ENCODE measurements at regions of chr11 and their contacts with region 1.

Region 1: GRCh38 chr11:10307442-10308207 is 2.8 kb downstream of the ADM start:
- DNase-seq: no peak
- ATAC-seq: peak; percentile 46
- H3K4me3 ChIP-seq: peak overlapping the region; percentile 64 to 90
- H3K27ac ChIP-seq: peak overlapping the region; percentile 100
- H3K4me1 ChIP-seq: peaks cover 28% of the 10 kb centered on the region
- H3K27me3 ChIP-seq: no peaks in the 10 kb centered on the region
- CTCF ChIP-seq: peak; percentile 100

Region 2: DNA sequence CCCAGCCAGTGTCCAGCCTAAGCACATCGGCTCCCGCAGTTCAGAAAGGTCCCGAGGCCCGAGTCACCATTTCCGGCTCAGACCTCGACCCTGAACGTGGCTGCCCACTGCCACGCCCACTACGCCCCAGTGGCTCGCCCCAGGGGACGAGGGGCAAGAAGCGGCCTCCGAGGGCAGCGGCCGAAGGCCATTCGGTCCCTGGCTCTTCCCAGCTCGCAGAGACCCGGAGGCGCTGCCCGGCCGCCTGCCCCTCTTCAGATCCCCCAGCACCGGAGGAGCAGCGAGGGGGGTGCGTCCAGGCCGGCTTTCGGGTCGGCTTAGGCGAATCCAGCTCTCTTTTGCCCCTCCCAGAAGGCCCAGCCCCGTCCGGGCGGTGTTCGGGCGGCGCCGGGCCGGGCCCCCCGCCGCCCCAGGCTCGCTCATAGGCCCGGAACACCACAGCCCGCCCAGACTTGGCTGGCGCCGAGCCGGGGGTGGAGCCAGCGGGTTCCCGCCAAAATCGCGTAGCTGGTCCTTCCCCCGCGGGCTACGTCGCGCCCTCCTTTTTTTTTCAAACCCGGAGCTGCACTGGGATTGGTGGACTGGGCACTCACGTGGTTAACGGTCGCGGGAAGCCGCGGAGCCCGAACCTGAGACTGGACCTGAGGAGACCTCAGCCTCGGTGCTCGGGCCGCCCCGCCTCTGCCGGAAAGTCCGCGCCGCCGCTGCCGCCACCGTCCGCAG is 734.4 kb before region 1 on chr11 and contains the start of gene WEE1:
- CTCF ChIA-PET with region 1: interaction called, 9 read pairs
- POLR2A ChIA-PET with region 1: interaction called, 7 read pairs
- in situ Hi-C with region 1: loop called (anchors 25 kb)
- intact Hi-C with region 1: loop called (anchors 10 kb)
- DNase-seq: peak; percentile 98
- ATAC-seq: peak; percentile 90
- H3K4me3 ChIP-seq: peak within 1 kb of the TSS; percentile 85 to 87
- H3K27ac ChIP-seq: peak within 1 kb of the TSS; percentile 99
- H3K4me1 ChIP-seq: peaks cover 50% of the 10 kb centered on the region
- H3K27me3 ChIP-seq: no peaks in the 10 kb centered on the region
- CTCF ChIP-seq: no peak
- total RNA-seq, gene WEE1: 67.9 TPM

Region 3: GRCh38 chr11:9861860-9862725 is 445.5 kb before region 1 on chr11:
- CTCF ChIA-PET with region 1: no interaction called
- POLR2A ChIA-PET with region 1: no interaction called
- in situ Hi-C with region 1: loop called (anchors 25 kb)
- intact Hi-C with region 1: no loop called
- DNase-seq: peak; percentile 74
- ATAC-seq: peak; percentile 91
- H3K4me3 ChIP-seq: no peak overlapping the region
- H3K27ac ChIP-seq: peak overlapping the region; percentile 96
- H3K4me1 ChIP-seq: peaks cover 56% of the 10 kb centered on the region
- H3K27me3 ChIP-seq: no peaks in the 10 kb centered on the region
- CTCF ChIP-seq: peak; percentile 97

Region 4: DNA sequence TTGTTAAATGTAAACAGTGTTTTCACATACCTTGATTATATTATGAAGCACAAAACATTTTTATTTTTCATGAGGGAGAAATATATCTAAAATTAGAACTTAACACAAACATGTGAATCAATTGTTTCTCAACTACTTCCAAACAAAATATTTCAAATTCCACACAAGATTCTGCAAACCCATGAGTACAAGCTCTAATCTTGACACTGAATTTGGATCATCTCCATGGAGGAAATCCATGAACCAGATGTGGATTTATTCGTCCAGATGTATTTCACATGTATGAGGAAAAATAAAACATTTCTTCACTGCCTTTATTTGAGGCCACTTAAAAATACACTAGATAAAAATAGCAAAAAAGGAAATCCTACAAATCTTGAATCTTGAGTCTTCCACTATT is 197.8 kb before region 1 on chr11:
- CTCF ChIA-PET with region 1: no interaction called
- POLR2A ChIA-PET with region 1: no interaction called
- in situ Hi-C with region 1: no loop called
- intact Hi-C with region 1: loop called (anchors 10 kb)
- DNase-seq: no peak
- ATAC-seq: no peak
- H3K4me3 ChIP-seq: no peak overlapping the region
- H3K27ac ChIP-seq: peak overlapping the region; percentile 54; the same call in 1 of the 2 replicates
- H3K4me1 ChIP-seq: peaks cover 30% of the 10 kb centered on the region; the same call in 1 of the 2 replicates
- H3K27me3 ChIP-seq: no peaks in the 10 kb centered on the region
- CTCF ChIP-seq: no peak

Region 5: GRCh38 chr11:10233581-10233980 is 74.0 kb before region 1 on chr11:
- CTCF ChIA-PET with region 1: no interaction called
- POLR2A ChIA-PET with region 1: no interaction called
- in situ Hi-C with region 1: loop called (anchors 5 kb)
- intact Hi-C with region 1: no loop called
- DNase-seq: no peak
- ATAC-seq: 0 out of 2 replicates have a peak, but pooled peaks have one; percentile 48
- H3K4me3 ChIP-seq: no peak overlapping the region
- H3K27ac ChIP-seq: no peak overlapping the region
- H3K4me1 ChIP-seq: peaks cover 11% of the 10 kb centered on the region; the same call in 1 of the 2 replicates
- H3K27me3 ChIP-seq: no peaks in the 10 kb centered on the region
- CTCF ChIP-seq: no peak

Region 6: DNA sequence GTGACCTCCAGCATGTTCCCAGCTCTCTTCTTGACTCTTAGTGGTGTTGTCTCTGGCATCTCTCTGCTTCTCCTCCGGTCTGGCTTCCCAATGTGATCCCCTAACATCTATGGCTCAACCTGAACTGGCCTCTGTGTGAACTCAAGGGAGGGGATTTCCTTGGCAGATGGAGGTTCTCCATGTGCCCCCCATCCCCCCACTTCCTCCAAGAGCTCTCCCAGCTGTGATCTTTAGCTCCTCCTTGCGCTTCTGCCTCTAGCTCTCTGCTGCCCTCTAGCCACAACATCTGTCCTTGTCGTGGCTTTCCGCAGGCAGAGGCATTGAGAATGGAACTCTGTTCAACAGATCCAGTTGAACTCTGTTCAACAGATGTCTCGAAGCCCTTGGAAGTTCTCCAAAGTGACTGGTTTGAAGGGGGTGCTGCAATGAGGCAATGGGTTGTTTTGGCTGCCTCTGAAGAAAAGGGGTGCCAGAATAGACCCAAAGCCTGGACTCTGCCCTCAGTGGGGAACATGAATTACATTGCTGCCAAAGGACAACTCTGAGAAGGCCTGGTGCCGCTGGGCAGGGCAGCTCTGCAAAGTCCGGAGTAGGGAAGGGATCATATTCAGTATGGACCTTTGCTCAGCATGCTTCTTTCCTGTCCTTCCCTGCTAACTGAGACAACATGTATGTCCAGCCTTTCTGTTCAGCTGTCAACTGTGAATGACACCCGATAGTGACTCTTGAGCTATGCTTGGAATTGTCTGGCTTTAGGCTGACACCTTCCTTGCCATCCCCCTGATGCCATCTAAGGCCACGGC is 59.1 kb after region 1 on chr11:
- CTCF ChIA-PET with region 1: interaction called, 24 read pairs
- POLR2A ChIA-PET with region 1: interaction called, 5 read pairs
- in situ Hi-C with region 1: no loop called
- intact Hi-C with region 1: no loop called
- DNase-seq: peak; percentile 85
- ATAC-seq: peak; percentile 95
- H3K4me3 ChIP-seq: peak overlapping the region in 1 of 2 experiments; percentile 12; a peak in 1 of 4 replicates
- H3K27ac ChIP-seq: peak overlapping the region; percentile 57; the same call in 1 of the 2 replicates
- H3K4me1 ChIP-seq: peaks cover 9% of the 10 kb centered on the region
- H3K27me3 ChIP-seq: no peaks in the 10 kb centered on the region
- CTCF ChIP-seq: peak; percentile 98